Heart left ventricle (tissue), 16 donors: ENCODE measurements at regions of chr11 and their contacts with region 1.

Region 1: DNA sequence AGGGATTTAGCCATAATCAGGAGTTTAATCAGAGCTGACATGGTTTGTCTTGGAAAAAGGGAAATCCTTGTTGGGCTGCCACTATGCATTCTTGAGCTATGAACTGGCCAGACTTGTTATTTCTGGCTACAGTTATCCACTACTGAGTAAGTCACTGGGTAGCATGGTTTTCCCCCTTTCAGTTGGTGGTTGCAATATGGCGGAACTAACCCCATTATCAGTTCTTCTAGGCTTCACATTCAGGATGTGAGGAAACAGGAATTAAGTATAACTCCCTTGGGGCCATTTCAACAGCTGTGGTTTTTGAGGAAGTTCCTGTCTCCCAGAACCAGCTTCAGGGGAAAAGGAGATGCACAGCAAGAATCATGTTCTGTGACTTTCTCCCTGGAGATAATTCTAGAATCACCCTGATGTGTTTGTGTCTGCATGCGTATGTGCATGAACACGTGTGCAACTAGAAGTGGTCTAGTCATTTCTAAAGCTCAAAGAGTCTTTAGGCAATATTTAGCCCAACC is 103.0 kb upstream of the CD44 start:
- DNase-seq: no peak
- ATAC-seq: peak in 3 of 4 donors; percentile 57 to 83 (median 76)
- H3K4me3 ChIP-seq: no peak overlapping the region
- H3K27ac ChIP-seq: peak overlapping the region in 1 of 12 donors; percentile 71
- H3K4me1 ChIP-seq: peaks cover 0 to 42% (median 6%) of the 10 kb centered on the region in 12 donors
- H3K27me3 ChIP-seq: no peaks in the 10 kb centered on the region
- CTCF ChIP-seq: no peak
- POLR2A ChIP-seq: no peak

Region 2: DNA sequence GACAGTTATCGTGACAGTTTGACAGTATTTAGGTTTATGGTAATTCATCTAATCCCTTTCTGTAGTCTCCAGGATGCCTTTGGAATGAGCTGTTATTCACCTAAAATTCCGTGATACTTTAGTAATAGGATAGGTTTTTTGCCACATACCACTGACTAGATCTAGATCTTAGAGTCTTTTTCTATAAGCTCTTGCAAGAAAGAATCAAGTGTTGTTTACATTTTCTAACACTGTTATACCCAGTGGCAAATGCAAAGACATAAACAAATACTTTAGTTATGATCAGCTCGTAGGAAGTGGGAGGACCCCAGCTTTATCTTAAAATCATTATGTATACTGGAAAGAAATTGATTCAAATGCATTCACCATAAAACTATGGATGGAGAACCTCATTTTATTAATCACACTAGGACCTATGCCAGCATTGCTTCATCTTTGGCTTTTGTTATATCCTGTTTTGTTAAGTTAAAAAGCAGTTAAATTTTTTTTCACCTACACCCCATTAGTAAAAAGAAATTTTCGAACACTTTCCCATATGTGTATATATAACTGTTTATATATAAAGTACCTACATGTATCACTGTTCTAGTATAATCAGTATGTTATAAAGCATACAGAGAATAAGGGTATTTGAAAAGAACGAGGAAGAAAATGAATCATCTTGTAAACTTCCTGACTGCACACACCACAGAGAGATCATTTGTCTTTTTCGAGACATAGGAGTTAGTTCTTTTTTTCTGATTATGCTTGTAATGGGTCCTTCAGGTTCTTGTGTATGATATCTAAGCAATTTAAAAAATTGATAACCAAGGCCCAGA is 58.7 kb before region 1 on chr11:
- intact Hi-C with region 1: no loop called
- DNase-seq: no peak
- ATAC-seq: peak in 1 of 4 donors; percentile 34
- H3K4me3 ChIP-seq: no peak overlapping the region
- H3K27ac ChIP-seq: peak overlapping the region in 1 of 12 donors; percentile 2
- H3K4me1 ChIP-seq: peaks cover 0 to 20% (median 5%) of the 10 kb centered on the region in 12 donors
- H3K27me3 ChIP-seq: no peaks in the 10 kb centered on the region
- CTCF ChIP-seq: no peak
- POLR2A ChIP-seq: no peak

Region 3: DNA sequence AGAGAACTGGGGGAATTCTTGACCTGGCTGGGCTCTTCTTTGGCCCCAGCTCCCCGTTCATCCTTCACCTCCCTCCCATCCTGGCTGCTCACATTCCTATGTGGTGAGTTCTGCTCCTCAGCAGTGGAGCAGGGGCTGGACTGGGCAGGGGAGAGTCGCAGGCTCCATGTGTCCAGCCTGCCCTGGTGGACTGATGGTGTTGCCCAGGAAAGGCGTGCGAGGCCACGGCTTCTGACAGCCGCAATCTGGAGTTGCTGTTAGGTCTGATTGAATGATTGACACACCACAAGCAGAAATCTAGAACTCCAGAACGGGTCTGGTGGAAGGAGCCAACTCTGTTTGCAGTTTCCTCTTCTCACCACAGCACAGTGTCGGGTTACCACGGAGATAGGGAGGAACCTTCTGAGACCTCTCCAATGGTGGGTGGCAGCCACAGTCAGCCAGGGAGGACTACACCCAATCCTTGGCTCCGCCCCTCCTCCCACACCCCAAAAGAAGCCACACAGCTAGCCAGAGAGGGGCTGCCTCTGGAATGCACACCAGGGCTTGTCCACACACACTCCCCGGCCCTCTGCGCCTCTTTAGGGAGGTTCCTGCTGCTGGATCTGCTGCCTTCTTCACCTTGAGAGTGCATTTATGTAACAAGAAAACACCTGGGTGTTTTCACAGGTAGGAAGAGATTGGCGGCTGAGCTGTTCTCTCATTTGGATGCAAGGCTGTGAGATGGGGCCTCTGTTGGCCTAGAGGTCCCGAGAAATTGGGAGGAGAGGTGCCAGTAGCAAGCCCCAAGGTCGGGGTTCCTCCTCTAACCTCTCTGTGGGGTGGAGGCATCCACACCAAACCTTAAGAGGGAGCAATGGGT is 46.6 kb after region 1 on chr11:
- intact Hi-C with region 1: loop called in 1 of 10 experiments (anchors 5 kb)
- DNase-seq: peak; percentile 41 to 77 (median 61)
- ATAC-seq: peak; percentile 18 to 83 (median 71)
- H3K4me3 ChIP-seq: peak overlapping the region in 1 of 12 donors; percentile 30
- H3K27ac ChIP-seq: peak overlapping the region in 6 of 12 donors; percentile 6 to 87 (median 50)
- H3K4me1 ChIP-seq: peaks cover 0 to 75% (median 33%) of the 10 kb centered on the region in 12 donors
- H3K27me3 ChIP-seq: no peaks in the 10 kb centered on the region
- CTCF ChIP-seq: no peak
- POLR2A ChIP-seq: no peak